AG04449 (cell line): ENCODE measurements at regions of chr2 and their contacts with region 1.

Region 1: DNA sequence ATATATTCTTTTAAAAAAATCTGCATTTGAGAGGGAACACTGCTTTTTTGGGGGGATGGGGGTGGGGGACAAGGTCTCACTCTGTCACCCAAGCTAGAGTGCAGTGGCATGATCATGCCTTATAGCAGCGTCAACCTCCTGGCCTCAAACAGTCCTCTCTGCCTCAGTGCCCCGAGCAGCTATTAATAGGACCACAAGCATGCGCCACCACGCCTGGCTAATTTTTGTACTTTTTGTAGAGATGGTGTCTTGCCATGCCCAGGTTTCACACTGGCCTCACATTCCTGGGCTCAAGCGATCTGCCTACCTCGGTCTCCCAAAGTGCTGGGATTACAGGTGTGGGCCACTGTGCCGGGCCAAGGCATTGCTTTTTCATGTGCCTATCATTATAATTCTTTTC is 154.2 kb downstream of the ATAD2B start:
- DNase-seq: no peak
- H3K4me3 ChIP-seq: no peak overlapping the region
- CTCF ChIP-seq: no peak

Region 2: DNA sequence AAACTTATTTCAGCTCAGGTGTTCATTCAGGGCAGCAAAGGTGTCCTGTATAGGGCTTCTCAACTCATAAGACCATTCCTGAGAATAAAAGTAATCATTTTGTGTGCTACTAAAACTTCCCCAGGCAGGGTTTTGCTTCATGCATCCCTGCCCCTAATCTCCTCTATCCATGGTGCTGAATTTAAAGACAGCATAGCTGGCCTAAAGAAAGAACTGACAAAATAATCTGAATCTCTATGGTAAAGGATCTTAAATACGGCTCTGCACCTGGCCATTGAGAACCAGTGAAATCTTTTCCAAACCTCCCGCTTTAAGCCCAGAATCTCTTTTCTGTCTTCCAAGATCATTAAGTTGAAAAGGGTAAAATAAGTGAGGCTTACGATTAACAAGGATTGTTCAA is 679.9 kb before region 1 on chr2:
- CTCF ChIA-PET with region 1: no interaction called
- POLR2A ChIA-PET with region 1: no interaction called
- DNase-seq: no peak
- H3K4me3 ChIP-seq: no peak overlapping the region
- CTCF ChIP-seq: no peak

Region 3: DNA sequence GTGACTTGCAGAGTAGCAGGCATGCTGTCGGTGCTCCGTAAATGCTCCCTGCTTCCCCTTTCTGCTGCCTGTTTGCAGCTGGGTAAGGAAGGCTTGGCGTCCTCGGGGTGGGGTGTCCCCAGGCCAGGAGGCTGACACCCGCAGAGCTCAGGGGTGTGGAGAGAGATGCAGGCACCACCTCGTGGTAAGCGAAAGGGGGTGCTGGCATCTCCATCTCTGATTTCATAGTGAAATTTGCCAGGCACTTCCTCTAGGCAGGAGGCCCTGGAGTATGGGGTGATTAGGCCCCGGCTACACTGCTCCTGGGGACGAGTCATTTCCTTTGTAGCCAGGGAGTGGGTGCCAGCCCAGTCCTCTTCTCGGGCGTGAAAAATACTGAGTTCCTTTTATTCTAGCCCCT is 227.3 kb before region 1 on chr2:
- CTCF ChIA-PET with region 1: no interaction called
- POLR2A ChIA-PET with region 1: no interaction called
- DNase-seq: no peak
- H3K4me3 ChIP-seq: no peak overlapping the region
- CTCF ChIP-seq: peak; percentile 13

Region 4: GRCh38 chr2:23760736-23761135 is 11.9 kb before region 1 on chr2:
- CTCF ChIA-PET with region 1: interaction called, 10 read pairs
- POLR2A ChIA-PET with region 1: no interaction called
- DNase-seq: no peak
- H3K4me3 ChIP-seq: no peak overlapping the region
- CTCF ChIP-seq: no peak

Region 5: DNA sequence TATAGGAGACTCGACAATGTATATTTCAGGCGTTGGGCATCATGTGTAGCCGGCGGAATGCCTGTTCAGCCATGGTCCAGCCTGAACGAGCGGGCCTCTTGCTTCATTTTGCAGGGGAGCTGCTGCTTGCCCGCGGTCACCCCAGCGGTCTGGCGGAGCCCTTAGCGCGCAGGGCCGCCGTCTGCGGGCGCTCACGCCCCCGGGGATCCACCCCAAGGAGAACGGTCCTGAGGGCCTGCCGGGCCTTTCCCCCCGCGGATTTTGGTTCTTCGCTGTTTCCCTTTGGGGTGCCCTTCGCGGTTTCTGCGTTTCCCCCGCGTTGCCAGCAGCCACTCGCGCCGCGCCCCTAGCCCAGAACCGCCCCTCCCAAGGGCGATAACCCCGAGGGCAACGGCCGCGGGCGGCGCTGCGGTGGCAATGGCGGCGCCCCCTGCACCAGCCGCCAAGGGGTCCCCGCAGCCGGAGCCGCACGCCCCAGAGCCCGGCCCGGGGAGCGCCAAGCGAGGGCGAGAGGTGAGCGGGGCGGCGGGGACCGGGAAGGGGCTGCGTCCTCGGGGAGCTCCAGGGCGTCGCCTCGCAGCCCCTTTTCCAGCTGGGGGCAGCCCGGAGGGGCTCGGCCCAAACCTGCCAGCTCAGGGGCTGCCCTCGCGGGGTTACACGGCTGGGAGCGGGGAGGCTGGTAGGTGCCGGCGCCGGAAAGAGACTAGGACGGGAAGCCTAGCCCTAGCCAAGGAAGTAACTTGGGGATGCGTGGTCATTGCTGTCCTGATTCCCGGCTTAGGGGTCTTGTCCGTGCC is 237.2 kb after region 1 on chr2 and contains the start of gene MFSD2B:
- CTCF ChIA-PET with region 1: no interaction called
- POLR2A ChIA-PET with region 1: no interaction called
- DNase-seq: no peak
- H3K4me3 ChIP-seq: peak within 1 kb of the TSS; percentile 48
- CTCF ChIP-seq: no peak